Activated T-helper 1 cell treated with anti-CD3 and anti-CD28 coated beads, Interleukin-12 subunit alpha, Interleukin-12 subunit beta, Interleukin-2, Interleukin-4 antibody, amounts not matched to agents 30 ng/mL and 10 ng/mL and 1 ng/mL, durations not matched to agents 14 hours and 24 hours and 36 hours (primary cell): ENCODE measurements at regions of chr1 and their contacts with region 1.

Region 1: DNA sequence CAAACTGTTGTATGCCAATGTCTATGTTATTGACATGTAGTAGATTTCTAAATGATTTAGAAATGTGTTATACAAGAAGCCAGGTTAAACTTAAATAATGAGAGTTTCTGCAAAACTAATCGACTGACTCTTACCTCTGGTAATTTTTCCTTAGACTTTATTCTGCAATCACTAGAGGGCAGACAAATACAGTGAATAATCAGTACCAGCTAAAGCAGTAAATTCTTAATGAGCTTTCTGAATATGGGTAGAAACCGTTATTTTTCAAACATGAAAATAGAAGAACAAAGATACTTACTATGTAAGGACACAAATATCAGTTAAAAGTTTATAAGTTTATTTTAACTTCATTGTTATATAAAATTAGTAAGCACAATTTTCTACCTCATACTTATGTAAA is 97.9 kb upstream of the RGS1 start:
- DNase-seq: no peak
- H3K4me3 Mint-ChIP-seq: no peak overlapping the region
- H3K27ac Mint-ChIP-seq: no peak overlapping the region
- H3K4me1 Mint-ChIP-seq: no peaks in the 10 kb centered on the region
- H3K27me3 Mint-ChIP-seq: peaks cover 12% of the 10 kb centered on the region

Region 2: GRCh38 chr1:192545896-192546521 is 68.4 kb after region 1 on chr1:
- intact Hi-C with region 1: loop called (anchors 2 kb)
- DNase-seq: no peak
- H3K4me3 Mint-ChIP-seq: no peak overlapping the region
- H3K27ac Mint-ChIP-seq: peak overlapping the region; percentile 74
- H3K4me1 Mint-ChIP-seq: peaks cover 79% of the 10 kb centered on the region
- H3K27me3 Mint-ChIP-seq: no peaks in the 10 kb centered on the region

Region 3: GRCh38 chr1:192557841-192558595 is 80.4 kb after region 1 on chr1:
- intact Hi-C with region 1: no loop called
- DNase-seq: no peak
- H3K4me3 Mint-ChIP-seq: no peak overlapping the region
- H3K27ac Mint-ChIP-seq: no peak overlapping the region
- H3K4me1 Mint-ChIP-seq: peaks cover 34% of the 10 kb centered on the region
- H3K27me3 Mint-ChIP-seq: no peaks in the 10 kb centered on the region

Region 4: GRCh38 chr1:193019442-193020026 is 541.9 kb after region 1 on chr1:
- intact Hi-C with region 1: loop called (anchors 1 kb)
- DNase-seq: no peak
- H3K4me3 Mint-ChIP-seq: no peak overlapping the region
- H3K27ac Mint-ChIP-seq: no peak overlapping the region
- H3K4me1 Mint-ChIP-seq: no peaks in the 10 kb centered on the region
- H3K27me3 Mint-ChIP-seq: no peaks in the 10 kb centered on the region

Region 5: DNA sequence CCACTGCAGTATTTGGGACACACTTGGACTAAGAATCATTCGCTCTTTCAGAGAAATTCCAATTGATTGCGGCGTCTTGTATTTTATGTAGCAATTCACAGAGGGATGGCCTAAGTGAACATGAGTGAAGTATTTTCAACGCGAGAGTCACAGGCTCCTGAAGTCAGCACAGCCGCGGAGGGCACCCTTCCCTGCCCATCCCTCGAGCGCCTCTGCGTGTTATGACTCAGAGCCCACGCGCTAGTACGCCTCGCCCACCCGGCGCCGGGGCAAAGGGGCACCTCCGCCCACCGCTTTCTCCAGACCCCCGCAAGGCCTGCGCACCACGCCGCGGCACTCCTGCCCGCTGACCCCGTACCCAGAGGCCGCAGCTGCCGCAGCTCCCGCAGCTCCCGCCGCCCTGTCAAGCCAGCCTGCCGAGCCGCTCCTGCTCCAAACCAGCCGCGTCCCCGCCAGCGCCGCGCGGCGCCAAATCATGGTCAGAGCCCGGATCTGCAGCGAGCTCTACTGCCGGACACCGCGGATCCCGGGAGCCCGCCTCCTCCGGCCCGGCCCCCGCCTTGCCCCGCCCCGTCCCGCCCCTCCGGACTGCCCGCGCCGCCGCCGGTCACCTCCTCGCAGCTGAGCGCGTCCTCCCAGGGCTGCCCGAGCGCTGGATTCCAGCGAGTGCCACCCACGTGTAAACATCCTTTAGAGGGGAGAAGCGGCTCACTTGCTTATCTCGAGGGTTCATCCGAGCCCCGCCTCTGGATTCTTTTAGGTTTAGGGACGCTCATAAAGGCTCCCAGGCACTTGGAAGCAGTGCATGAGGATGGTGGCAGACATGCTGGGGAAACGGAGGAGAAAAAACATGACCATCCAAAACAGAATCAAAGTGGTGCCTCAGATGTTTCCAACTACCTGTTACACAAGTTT is 627.5 kb after region 1 on chr1 and contains the start of gene GLRX2:
- intact Hi-C with region 1: loop called (anchors 5 kb)
- DNase-seq: peak; percentile 42
- H3K4me3 Mint-ChIP-seq: peak within 1 kb of the TSS; percentile 92
- H3K27ac Mint-ChIP-seq: peak within 1 kb of the TSS; percentile 77
- H3K4me1 Mint-ChIP-seq: peaks cover 24% of the 10 kb centered on the region
- H3K27me3 Mint-ChIP-seq: peaks cover 14% of the 10 kb centered on the region
- total RNA-seq, gene GLRX2: 29.6 and 32.9 TPM in 2 replicates

Region 6: GRCh38 chr1:194295685-194296084 is 1818.1 kb after region 1 on chr1:
- intact Hi-C with region 1: loop called (anchors 10 kb)
- DNase-seq: peak; percentile 12
- H3K4me3 Mint-ChIP-seq: no peak overlapping the region
- H3K27ac Mint-ChIP-seq: no peak overlapping the region
- H3K4me1 Mint-ChIP-seq: peaks cover 18% of the 10 kb centered on the region
- H3K27me3 Mint-ChIP-seq: no peaks in the 10 kb centered on the region